Ascending aorta (tissue), 2 donors: ENCODE measurements at regions of chr9 and their contacts with region 1.

Region 1: GRCh38 chr9:21317956-21318923 is 13.1 kb upstream of the IFNA5 start:
- DNase-seq: no peak
- H3K4me3 ChIP-seq: no peak overlapping the region
- H3K27ac ChIP-seq: no peak overlapping the region
- H3K4me1 ChIP-seq: peaks cover 0 to 3% of the 10 kb centered on the region in 2 donors
- H3K27me3 ChIP-seq: no peaks in the 10 kb centered on the region
- CTCF ChIP-seq: peak in 2 of 3 experiments; percentile 58 to 63

Region 2: GRCh38 chr9:21078717-21079116 is 239.5 kb before region 1 on chr9:
- intact Hi-C with region 1: no loop called
- DNase-seq: no peak
- H3K4me3 ChIP-seq: no peak overlapping the region
- H3K27ac ChIP-seq: no peak overlapping the region
- H3K4me1 ChIP-seq: peaks cover 0 to 6% of the 10 kb centered on the region in 2 donors
- H3K27me3 ChIP-seq: no peaks in the 10 kb centered on the region
- CTCF ChIP-seq: no peak

Region 3: GRCh38 chr9:21455320-21455719 is 137.1 kb after region 1 on chr9:
- intact Hi-C with region 1: loop called (anchors 5 kb)
- DNase-seq: no peak
- H3K4me3 ChIP-seq: no peak overlapping the region
- H3K27ac ChIP-seq: no peak overlapping the region
- H3K4me1 ChIP-seq: no peaks in the 10 kb centered on the region
- H3K27me3 ChIP-seq: no peaks in the 10 kb centered on the region
- CTCF ChIP-seq: peak; percentile 24 to 46 (median 28)